ENCODE measurements at regions of chr15 and their contacts with region 1.

Region 1: DNA sequence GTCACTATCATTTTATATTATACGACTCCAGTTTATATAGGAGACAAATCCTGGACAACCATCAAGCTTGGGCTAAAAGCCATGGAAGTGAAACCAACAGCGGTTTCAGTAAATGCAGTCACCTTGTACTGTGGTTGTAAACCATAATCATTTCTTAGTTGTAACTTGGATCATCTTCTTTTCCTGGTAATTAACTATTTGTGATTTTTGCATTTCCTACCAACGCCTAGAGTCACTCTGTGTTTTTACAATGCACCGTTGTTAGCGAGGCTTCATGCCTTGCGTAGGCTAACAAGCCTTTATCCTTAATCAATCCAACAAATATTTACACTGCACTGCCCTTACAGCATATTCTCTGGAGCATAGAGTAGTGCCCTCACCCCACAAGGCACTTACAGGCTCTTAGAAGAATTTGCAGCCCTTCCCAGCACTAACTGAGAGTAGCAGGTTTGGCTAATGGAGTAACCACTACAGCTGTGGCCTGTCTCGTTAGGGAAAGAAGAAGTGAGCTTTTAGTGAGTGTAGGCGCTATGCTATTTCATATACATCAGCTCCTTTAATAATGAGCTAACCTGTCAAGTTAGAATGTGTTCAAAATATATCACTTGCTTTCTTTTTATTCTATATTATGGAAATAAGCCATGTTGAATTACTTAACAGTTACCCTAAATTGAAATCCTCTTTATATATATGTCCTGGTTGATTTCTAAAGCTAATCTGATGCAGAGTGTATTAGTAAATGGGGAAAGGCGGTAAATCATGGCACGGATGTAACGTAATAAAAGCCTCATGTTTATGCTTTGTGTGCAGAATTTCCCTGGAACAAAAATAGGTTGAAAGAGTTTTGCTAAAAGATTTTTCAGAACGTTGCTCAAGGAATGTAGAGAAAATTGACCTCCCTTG is 62.8 kb downstream of the ABHD2 start:
- DNase-seq: no peak
- ATAC-seq: no peak
- H3K4me3 ChIP-seq: no peak overlapping the region
- H3K27ac ChIP-seq: peak overlapping the region in 4 of 12 donors; percentile 1 to 44 (median 20)
- H3K4me1 ChIP-seq: peaks cover 0 to 54% (median 23%) of the 10 kb centered on the region in 12 donors
- H3K27me3 ChIP-seq: no peaks in the 10 kb centered on the region
- CTCF ChIP-seq: no peak
- POLR2A ChIP-seq: no peak

Region 2: GRCh38 chr15:89101302-89102191 is 49.5 kb before region 1 on chr15:
- intact Hi-C with region 1: loop called in 1 of 10 experiments (anchors 10 kb)
- DNase-seq: peak; percentile 65 to 89 (median 77)
- ATAC-seq: peak; percentile 69 to 87 (median 86)
- H3K4me3 ChIP-seq: no peak overlapping the region
- H3K27ac ChIP-seq: peak overlapping the region; percentile 7 to 97 (median 88)
- H3K4me1 ChIP-seq: peaks cover 21 to 96% (median 72%) of the 10 kb centered on the region in 12 donors
- H3K27me3 ChIP-seq: no peaks in the 10 kb centered on the region
- CTCF ChIP-seq: no peak
- POLR2A ChIP-seq: peak in 1 of 2 donors; percentile 22

Region 3: DNA sequence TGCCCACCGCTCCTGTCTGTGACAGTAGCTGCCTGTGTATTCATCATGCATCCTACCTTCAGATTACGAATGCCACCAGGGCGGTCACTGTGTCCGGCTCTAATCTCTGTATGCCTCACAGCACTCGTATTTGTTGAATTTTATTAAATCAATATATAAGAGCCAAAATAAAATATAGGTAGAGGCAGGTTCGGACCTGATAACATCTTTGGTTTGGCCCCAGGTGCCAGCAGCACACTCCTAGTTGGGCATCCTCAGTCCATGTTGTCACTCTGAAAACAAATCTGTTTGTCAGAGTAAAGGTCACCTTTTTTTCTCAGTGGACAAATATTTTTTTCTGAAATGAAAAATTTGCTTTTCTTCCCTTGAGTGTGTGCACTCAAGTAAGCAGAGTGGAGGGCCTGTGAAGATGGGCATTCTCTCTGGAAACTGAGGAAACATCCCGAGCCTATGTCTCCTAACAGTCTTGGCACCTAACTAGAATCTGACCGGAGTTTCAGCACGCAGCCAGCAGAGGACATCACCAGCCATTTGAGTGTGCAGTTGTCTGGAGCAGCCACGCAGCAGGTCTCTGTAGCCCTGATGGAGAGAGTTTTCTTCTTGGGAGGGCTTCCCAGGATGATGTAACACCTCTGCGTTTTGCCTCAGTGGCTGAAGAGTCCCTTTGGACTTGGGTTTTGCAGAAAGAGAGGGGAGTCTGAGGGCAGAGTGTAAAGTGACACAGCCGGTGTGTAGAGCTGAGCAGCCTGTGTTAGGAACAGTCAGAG is 11.4 kb before region 1 on chr15:
- intact Hi-C with region 1: loop called in 1 of 10 experiments (anchors 1 kb)
- DNase-seq: peak in 4 of 5 donors; percentile 41 to 65 (median 54)
- ATAC-seq: peak in 3 of 4 donors; percentile 10 to 14 (median 11)
- H3K4me3 ChIP-seq: no peak overlapping the region
- H3K27ac ChIP-seq: peak overlapping the region; percentile 31 to 90 (median 78)
- H3K4me1 ChIP-seq: peaks cover 22 to 100% (median 87%) of the 10 kb centered on the region in 12 donors
- H3K27me3 ChIP-seq: no peaks in the 10 kb centered on the region
- CTCF ChIP-seq: peak in 6 of 12 donors; percentile 11 to 42 (median 28)
- POLR2A ChIP-seq: no peak

Region 4: DNA sequence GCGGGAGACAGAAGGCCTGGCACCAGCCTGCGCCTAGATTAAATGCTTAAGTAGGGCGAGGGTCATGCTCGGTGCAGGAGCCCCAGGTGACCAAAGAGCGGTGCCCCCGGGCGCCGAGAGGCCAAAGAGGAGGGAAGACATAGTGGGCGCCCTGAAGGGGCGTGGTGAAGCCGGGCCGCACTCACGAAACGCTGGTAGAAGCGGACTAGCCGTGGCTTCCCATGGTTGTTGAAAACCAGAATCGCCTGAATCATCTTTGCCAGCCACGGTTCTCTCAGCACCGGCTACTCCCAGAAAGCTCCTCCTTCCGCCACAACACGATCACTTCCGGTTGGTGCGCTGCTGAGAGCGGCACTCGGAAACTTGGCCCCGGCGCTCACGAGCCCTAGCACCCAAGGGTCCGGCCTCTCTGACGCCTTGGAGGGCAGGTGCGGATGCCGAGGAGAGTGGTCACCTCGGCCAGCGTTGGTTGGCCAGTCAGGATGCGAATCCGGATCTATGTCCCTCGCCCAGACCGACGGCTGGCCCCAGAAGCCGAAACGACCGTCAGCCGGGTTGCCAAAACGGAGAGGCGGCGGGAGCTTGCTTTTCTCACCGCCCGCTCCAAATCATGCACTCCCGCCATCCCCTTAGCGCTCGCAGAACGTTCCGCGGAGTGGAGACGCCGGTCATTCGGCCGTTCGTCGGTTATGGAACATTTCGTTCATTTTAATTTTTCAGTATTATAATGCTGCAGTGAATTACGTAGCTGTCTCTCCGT is 742.9 kb after region 1 on chr15 and contains the start of gene AP3S2:
- intact Hi-C with region 1: no loop called
- DNase-seq: peak; percentile 90 to 94 (median 93)
- ATAC-seq: peak; percentile 98 to 99 (median 99)
- H3K4me3 ChIP-seq: peak within 1 kb of the TSS; percentile 55 to 100 (median 91)
- H3K27ac ChIP-seq: peak within 1 kb of the TSS; percentile 42 to 98 (median 92)
- H3K4me1 ChIP-seq: peaks cover 0 to 30% (median 13%) of the 10 kb centered on the region in 12 donors
- H3K27me3 ChIP-seq: no peaks in the 10 kb centered on the region
- CTCF ChIP-seq: peak in 1 of 12 donors; percentile 7
- POLR2A ChIP-seq: peak in 1 of 2 donors; percentile 61
- total RNA-seq, gene AP3S2: 37.1 to 64.6 (median 43.3) TPM